Transverse colon (tissue), 4 donors: ENCODE measurements at regions of chr2 and their contacts with region 1.

Region 1: DNA sequence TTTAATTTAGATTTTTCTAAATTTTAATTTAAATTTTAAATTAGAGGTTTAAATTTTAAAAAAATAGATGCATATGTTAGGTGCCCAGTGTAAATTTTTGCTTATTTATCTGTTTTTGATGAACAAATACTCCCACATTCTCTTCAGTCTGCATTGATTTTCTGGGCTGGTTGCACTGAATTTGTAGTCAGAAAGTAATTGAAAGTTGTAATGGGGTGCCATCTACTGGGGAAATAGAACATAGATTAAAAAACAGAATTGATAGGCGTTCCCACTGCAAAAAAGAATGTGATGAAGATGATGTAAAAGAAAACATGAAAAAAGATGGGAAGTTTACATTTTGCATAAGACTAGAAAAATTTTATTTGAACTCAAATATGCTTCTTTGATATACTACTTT is 51.7 kb upstream of the CCDC85A start:
- DNase-seq: no peak
- H3K4me3 ChIP-seq: no peak overlapping the region
- H3K27ac ChIP-seq: no peak overlapping the region
- H3K4me1 ChIP-seq: no peaks in the 10 kb centered on the region
- H3K27me3 ChIP-seq: no peaks in the 10 kb centered on the region
- CTCF ChIP-seq: peak in 4 of 5 experiments; percentile 19 to 30 (median 28)
- EP300 ChIP-seq: no peak
- POLR2A ChIP-seq: no peak

Region 2: GRCh38 chr2:55649211-55649610 is 482.9 kb before region 1 on chr2:
- in situ Hi-C with region 1: no loop called
- intact Hi-C with region 1: no loop called
- DNase-seq: no peak
- H3K4me3 ChIP-seq: no peak overlapping the region
- H3K27ac ChIP-seq: no peak overlapping the region
- H3K4me1 ChIP-seq: no peaks in the 10 kb centered on the region
- H3K27me3 ChIP-seq: no peaks in the 10 kb centered on the region
- CTCF ChIP-seq: no peak
- EP300 ChIP-seq: no peak
- POLR2A ChIP-seq: no peak

Region 3: DNA sequence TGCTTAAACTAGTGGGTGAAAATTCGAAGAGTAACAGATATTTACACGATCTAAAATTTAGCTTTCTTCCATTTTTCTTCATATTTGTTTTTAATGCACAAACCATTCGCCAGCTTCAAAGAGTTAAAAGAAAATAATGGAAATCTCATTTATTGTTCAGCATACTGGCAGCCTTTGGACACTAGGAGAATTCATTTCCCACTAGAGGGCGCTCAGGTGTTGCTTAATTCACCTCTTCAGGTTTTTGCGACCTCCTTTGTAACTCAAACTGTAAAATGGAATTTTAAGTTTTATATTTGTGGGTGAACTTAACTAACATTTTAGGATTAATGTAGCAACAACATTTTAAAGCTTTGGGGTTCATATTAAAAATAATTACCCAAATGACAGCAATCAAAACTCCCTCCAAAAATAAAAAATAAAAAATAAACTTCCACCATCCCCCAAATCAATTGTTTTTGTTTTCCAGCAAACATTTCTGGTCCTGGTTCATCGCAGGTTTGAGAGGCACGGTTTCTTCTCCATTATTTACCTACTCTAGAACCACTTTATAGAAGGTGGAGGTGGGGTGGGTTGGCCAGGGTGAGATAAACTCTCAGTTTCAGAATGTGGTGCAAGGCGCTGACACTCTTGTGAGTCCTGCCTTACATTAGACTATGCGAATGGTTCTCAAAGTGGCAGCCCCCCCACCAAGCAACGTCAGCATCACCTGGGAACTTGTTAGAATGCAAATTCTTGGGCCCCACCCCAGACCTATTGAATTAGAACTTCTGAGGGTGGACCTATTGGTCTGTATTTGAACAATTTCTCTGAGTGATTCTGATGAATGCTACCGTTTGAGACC is 413.8 kb before region 1 on chr2:
- in situ Hi-C with region 1: loop called in 1 of 4 experiments (anchors 25 kb)
- intact Hi-C with region 1: loop called (anchors 10 kb)
- DNase-seq: peak; percentile 40
- H3K4me3 ChIP-seq: no peak overlapping the region
- H3K27ac ChIP-seq: no peak overlapping the region
- H3K4me1 ChIP-seq: peaks cover 0 to 12% (median 5%) of the 10 kb centered on the region in 4 donors
- H3K27me3 ChIP-seq: no peaks in the 10 kb centered on the region
- CTCF ChIP-seq: peak; percentile 66 to 77 (median 74)
- EP300 ChIP-seq: no peak
- POLR2A ChIP-seq: no peak